ENCODE measurements at regions of chr9 and their contacts with region 1.

Region 1: DNA sequence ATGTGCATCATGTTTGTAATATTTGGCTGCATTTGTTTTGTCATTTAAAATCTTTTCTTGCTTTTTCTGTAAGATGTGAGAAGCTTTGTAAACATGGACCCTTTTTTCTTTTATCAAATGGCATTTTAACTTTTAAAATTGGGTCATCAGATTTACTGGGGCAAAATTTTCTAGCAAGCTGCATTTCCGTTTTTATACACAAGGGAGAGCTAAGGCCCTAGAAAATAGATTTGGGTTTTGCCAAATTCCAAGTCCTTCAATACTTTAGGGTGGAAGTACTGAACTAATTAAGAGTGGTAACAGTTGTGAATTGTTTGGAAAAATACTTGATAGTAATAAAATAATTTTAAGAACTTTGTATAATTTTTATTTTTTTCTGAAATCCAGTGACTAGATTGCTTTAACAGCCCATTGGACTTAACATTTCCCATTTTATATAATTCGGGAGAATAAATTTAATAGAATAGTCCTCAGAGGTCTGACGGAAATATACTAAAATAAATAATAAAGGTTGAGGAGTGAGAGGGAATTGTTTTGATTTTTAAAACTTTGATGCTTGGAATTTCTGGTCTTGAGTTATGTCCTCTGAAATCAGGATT is 117.4 kb downstream of the SMARCA2 start:
- DNase-seq: no peak
- H3K4me3 ChIP-seq: no peak overlapping the region
- H3K27ac ChIP-seq: no peak overlapping the region
- H3K4me1 ChIP-seq: peaks cover 0 to 44% (median 0%) of the 10 kb centered on the region in 3 donors
- H3K27me3 ChIP-seq: no peaks in the 10 kb centered on the region
- CTCF ChIP-seq: peak; percentile 47 to 87 (median 74)
- POLR2A ChIP-seq: no peak

Region 2: GRCh38 chr9:2085716-2086115 is 46.9 kb before region 1 on chr9:
- intact Hi-C with region 1: no loop called
- DNase-seq: no peak
- H3K4me3 ChIP-seq: no peak overlapping the region
- H3K27ac ChIP-seq: peak overlapping the region in 3 of 4 donors; percentile 2 to 31 (median 7)
- H3K4me1 ChIP-seq: peaks cover 0 to 7% (median 0%) of the 10 kb centered on the region in 3 donors
- H3K27me3 ChIP-seq: no peaks in the 10 kb centered on the region
- CTCF ChIP-seq: no peak
- POLR2A ChIP-seq: no peak

Region 3: DNA sequence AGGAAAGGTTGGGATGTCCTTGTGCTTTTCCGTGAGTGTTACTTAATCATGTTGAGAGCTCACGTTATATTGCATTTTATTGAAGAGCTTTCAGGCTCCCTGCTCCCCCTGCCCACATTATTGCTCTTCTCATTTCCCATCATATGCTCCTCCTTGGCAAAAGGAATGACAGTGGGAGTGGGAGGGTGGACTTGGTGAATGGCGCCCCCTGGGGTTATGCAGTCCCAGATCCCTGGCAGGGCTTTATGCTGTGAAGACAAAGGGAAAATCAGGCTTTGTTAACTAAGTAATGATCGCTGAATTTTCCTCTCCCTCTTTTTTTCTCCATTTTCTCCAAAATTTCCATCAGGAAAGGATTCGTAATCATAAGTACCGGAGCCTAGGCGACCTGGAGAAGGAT is 49.2 kb after region 1 on chr9:
- intact Hi-C with region 1: loop called (anchors 10 kb)
- DNase-seq: no peak
- H3K4me3 ChIP-seq: no peak overlapping the region
- H3K27ac ChIP-seq: no peak overlapping the region
- H3K4me1 ChIP-seq: peaks cover 0 to 21% (median 0%) of the 10 kb centered on the region in 3 donors
- H3K27me3 ChIP-seq: no peaks in the 10 kb centered on the region
- CTCF ChIP-seq: peak in 5 of 6 experiments; percentile 32 to 63 (median 52)
- POLR2A ChIP-seq: no peak